Aorta (tissue), 5 donors: ENCODE measurements at regions of chr6 and their contacts with region 1.

Region 1: DNA sequence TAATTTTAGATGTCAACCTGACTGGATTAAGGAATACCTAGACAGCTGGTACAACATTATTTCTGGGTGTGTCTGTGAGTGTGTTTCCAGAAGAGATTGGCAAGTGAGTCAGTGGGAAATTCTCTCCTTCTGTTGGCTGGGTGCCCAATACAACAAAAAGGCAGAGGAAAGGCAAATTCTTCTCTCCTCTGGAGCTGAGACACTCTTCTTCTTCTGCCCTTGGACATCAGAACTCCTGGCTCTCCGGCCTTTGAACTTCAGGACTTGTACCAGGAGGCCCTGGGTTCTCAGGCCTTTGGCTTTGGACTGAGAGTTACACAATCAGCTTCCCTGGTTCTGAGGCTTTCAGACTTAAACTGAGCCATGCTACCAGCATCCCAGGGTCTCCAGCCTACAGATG is 7.8 kb upstream of the BTN3A1 start:
- DNase-seq: no peak
- ATAC-seq: no peak
- H3K4me3 ChIP-seq: no peak overlapping the region
- H3K27ac ChIP-seq: no peak overlapping the region
- H3K4me1 ChIP-seq: no peaks in the 10 kb centered on the region
- H3K27me3 ChIP-seq: no peaks in the 10 kb centered on the region

Region 2: GRCh38 chr6:26366504-26366903 is 27.8 kb before region 1 on chr6:
- intact Hi-C with region 1: loop called in 1 of 2 experiments (anchors 2 kb)
- DNase-seq: no peak
- ATAC-seq: no peak
- H3K4me3 ChIP-seq: no peak overlapping the region
- H3K27ac ChIP-seq: no peak overlapping the region
- H3K4me1 ChIP-seq: no peaks in the 10 kb centered on the region
- H3K27me3 ChIP-seq: no peaks in the 10 kb centered on the region